ENCODE measurements at regions of chr2 and their contacts with region 1.

Region 1: GRCh38 chr2:169613876-169614275 is 29.7 kb downstream of the PPIG start:
- DNase-seq: no peak
- ATAC-seq: no peak

Region 2: GRCh38 chr2:169050478-169051240 is 563.2 kb before region 1 on chr2:
- intact Hi-C with region 1: no loop called
- DNase-seq: no peak
- ATAC-seq: no peak

Region 3: GRCh38 chr2:169509298-169509885 is 104.5 kb before region 1 on chr2 and contains the start of gene KLHL41:
- intact Hi-C with region 1: no loop called
- DNase-seq: no peak
- ATAC-seq: peak; percentile 77
- total RNA-seq, gene KLHL41: 168 TPM

Region 4: GRCh38 chr2:169644173-169644572 is 30.3 kb after region 1 on chr2:
- intact Hi-C with region 1: loop called (anchors 2 kb)
- DNase-seq: no peak
- ATAC-seq: no peak

Measured in left ventricle myocardium superior (tissue), 1 donor.